ENCODE measurements at regions of chr14 and their contacts with region 1.

Region 1: GRCh38 chr14:61321385-61322010 is at the start of gene PRKCH:
- DNase-seq: peak; percentile 90
- ATAC-seq: peak; percentile 63
- H3K4me3 Mint-ChIP-seq: peak within 1 kb of the TSS; percentile 92
- H3K27ac Mint-ChIP-seq: peak within 1 kb of the TSS; percentile 94
- H3K4me1 Mint-ChIP-seq: peaks cover 26% of the 10 kb centered on the region
- H3K27me3 Mint-ChIP-seq: no peaks in the 10 kb centered on the region
- total RNA-seq, gene PRKCH: 109 to 145 TPM

Region 2: DNA sequence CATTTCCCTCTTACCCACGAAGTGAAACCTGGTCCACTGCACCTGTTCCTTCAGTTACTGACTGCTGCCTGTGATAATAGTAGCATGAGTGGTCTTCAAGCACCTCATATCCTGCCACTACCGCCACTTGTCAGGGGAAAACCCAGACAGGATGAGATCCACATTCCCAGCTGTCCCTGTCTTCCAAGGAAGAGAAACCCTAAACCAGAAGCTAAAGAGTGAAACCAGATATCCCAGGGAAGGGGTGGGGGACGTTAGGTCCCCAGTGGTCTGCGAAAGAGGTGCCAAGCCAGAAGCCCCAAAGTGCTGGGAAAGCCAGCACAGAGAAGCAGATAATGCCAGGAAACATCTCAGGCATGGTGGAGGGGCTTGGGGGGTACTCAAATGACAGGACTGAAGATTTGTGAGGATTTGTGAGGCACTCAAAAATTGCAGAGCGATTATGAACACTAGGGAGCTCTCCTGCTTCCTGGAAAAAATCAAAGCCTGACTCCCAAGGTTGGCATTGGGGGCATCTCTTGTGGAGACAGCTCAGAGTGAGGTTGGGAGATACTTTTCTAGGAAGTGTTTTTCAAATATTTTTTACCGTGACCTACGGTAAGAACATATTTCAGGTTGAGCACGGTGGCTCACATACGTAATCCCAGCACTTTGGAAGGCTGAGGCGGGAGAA is 118.3 kb before region 1 on chr14:
- CTCF ChIA-PET with region 1: no interaction called
- POLR2A ChIA-PET with region 1: no interaction called
- intact Hi-C with region 1: no loop called
- DNase-seq: no peak
- ATAC-seq: no peak
- H3K4me3 Mint-ChIP-seq: no peak overlapping the region
- H3K27ac Mint-ChIP-seq: no peak overlapping the region
- H3K4me1 Mint-ChIP-seq: no peaks in the 10 kb centered on the region
- H3K27me3 Mint-ChIP-seq: peaks cover 18% of the 10 kb centered on the region

Region 3: GRCh38 chr14:61296719-61297502 is 24.6 kb before region 1 on chr14:
- CTCF ChIA-PET with region 1: interaction called, 9 read pairs
- POLR2A ChIA-PET with region 1: no interaction called
- intact Hi-C with region 1: loop called (anchors 2 kb)
- DNase-seq: no peak
- ATAC-seq: peak; percentile 67
- H3K4me3 Mint-ChIP-seq: no peak overlapping the region
- H3K27ac Mint-ChIP-seq: peak overlapping the region; percentile 29
- H3K4me1 Mint-ChIP-seq: peaks cover 54% of the 10 kb centered on the region
- H3K27me3 Mint-ChIP-seq: no peaks in the 10 kb centered on the region

Region 4: GRCh38 chr14:61335671-61336275 is 14.3 kb after region 1 on chr14:
- CTCF ChIA-PET with region 1: interaction called, 17 read pairs
- POLR2A ChIA-PET with region 1: interaction called, 5 read pairs
- intact Hi-C with region 1: loop called in 1 of 2 experiments (anchors 1 kb)
- DNase-seq: no peak
- ATAC-seq: peak; percentile 67
- H3K4me3 Mint-ChIP-seq: peak overlapping the region; percentile 48
- H3K27ac Mint-ChIP-seq: peak overlapping the region; percentile 90
- H3K4me1 Mint-ChIP-seq: peaks cover 85% of the 10 kb centered on the region
- H3K27me3 Mint-ChIP-seq: no peaks in the 10 kb centered on the region

Region 5: GRCh38 chr14:61368114-61368726 is 46.7 kb after region 1 on chr14:
- CTCF ChIA-PET with region 1: no interaction called
- POLR2A ChIA-PET with region 1: no interaction called
- intact Hi-C with region 1: no loop called
- DNase-seq: no peak
- ATAC-seq: no peak
- H3K4me3 Mint-ChIP-seq: no peak overlapping the region
- H3K27ac Mint-ChIP-seq: peak overlapping the region; percentile 88
- H3K4me1 Mint-ChIP-seq: peaks cover 32% of the 10 kb centered on the region
- H3K27me3 Mint-ChIP-seq: no peaks in the 10 kb centered on the region